ENCODE measurements at regions of chr18 and their contacts with region 1.

Region 1: DNA sequence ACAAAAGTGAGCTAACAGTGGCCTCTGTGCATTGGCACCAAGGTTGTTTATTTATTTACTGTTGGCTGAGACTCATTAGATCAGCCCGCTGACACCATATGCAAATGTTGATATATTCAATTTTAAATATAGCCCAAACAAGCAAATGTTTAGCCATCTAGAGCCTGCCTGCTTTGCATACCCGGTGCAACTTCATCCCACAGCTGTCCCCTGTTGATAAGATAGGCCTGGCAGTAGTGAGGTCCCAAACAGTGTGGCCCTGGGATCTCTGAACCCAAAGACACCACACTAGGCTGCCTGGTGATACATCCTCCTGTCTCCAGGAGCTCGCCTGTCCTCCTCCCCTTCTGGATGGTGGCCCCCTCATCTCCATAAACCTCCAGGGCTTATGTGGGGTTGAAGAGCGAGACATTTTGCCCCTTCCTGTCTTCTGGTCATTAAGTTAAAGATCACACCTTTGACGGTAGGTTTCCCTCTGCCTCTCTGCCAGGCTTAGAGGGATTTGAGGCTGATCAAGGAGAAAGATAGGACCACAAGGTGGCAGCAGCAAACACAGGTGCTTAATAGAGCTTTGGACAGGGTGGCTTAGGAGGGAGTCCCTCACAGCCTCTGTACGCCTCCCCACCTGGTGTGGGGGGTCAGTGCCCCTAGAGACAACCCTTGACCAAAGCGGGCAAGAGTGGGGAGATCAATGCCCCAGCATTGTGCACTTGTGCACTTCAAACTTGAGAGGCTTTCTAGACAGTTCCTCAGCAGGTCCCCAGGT is 23.7 kb upstream of the MYO5B start:
- DNase-seq: peak; percentile 10
- H3K4me3 Mint-ChIP-seq: no peak overlapping the region
- H3K27ac Mint-ChIP-seq: no peak overlapping the region
- H3K4me1 Mint-ChIP-seq: no peaks in the 10 kb centered on the region
- H3K27me3 Mint-ChIP-seq: peaks cover 13% of the 10 kb centered on the region

Region 2: GRCh38 chr18:50143295-50143694 is 75.3 kb before region 1 on chr18:
- intact Hi-C with region 1: no loop called
- DNase-seq: no peak
- H3K4me3 Mint-ChIP-seq: no peak overlapping the region
- H3K27ac Mint-ChIP-seq: no peak overlapping the region
- H3K4me1 Mint-ChIP-seq: no peaks in the 10 kb centered on the region
- H3K27me3 Mint-ChIP-seq: peaks cover 6% of the 10 kb centered on the region

Region 3: GRCh38 chr18:50266248-50266704 is 47.7 kb after region 1 on chr18 and contains the start of gene CFAP53:
- intact Hi-C with region 1: loop called (anchors 5 kb)
- DNase-seq: peak; percentile 79
- H3K4me3 Mint-ChIP-seq: peak within 1 kb of the TSS; percentile 80
- H3K27ac Mint-ChIP-seq: peak within 1 kb of the TSS; percentile 62
- H3K4me1 Mint-ChIP-seq: peaks cover 11% of the 10 kb centered on the region
- H3K27me3 Mint-ChIP-seq: peaks cover 7% of the 10 kb centered on the region
- total RNA-seq, gene CFAP53: 0.25 and 0.51 TPM in 2 replicates

Measured in activated T-helper 2 cell treated with anti-CD3 and anti-CD28 coated beads, Interferon-gamma antibody, Interleukin-2, Interleukin-4, amounts not matched to agents 10 μg/mL and 5 μg/mL and 100 μg/mL, durations not matched to agents 14 hours and 24 hours and 36 hours (primary cell).